ENCODE measurements at regions of chr18 and their contacts with region 1.

Region 1: GRCh38 chr18:53139746-53140500 is 799.9 kb downstream of the DCC start:
- DNase-seq: no peak
- H3K4me3 ChIP-seq: no peak overlapping the region
- H3K27ac ChIP-seq: no peak overlapping the region
- H3K4me1 ChIP-seq: no peaks in the 10 kb centered on the region
- H3K27me3 ChIP-seq: no peaks in the 10 kb centered on the region
- CTCF ChIP-seq: no peak
- EP300 ChIP-seq: no peak
- POLR2A ChIP-seq: no peak

Region 2: DNA sequence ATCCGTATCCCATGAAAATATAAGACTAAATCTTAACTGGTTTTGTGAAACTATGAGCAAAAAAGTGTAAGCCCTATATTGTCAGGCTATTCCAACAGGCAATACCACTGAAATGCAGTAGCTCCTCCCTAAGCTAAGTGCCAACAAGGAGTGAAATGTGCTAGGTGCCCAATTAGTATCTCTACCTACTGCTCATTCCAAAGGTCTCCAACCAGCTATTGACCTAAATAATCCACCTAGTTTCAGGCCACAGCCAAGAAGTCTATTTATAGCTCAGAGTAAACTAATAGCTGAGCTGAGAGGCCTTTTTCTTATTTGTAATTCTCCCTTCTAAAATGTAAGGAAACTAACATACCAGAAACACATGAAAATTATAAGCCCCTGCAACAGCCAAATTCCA is 317.8 kb before region 1 on chr18:
- intact Hi-C with region 1: no loop called
- DNase-seq: no peak
- H3K4me3 ChIP-seq: no peak overlapping the region
- H3K27ac ChIP-seq: peak overlapping the region in 1 of 4 donors; percentile 8
- H3K4me1 ChIP-seq: peaks cover 0 to 26% (median 24%) of the 10 kb centered on the region in 4 donors
- H3K27me3 ChIP-seq: no peaks in the 10 kb centered on the region
- CTCF ChIP-seq: no peak
- EP300 ChIP-seq: no peak
- POLR2A ChIP-seq: no peak

Region 3: DNA sequence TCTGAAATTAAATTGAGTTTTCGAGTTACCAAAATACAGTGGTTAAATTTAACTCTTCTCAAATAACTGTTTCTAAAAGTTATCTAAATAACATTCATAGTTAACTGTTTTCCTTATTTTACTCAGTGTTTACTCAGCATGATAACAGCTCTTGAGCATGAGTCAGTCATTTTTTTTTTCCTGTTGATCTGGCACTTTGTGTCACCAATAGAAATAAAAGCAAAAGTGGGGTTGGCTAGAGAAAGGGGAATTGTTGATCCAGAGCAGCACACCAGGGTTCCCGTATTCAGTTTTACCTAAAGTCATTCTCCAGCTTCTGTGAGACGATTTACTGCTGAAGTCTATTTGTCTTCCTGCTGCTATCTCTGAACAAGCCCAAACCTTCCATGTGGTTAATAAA is 51.7 kb after region 1 on chr18:
- intact Hi-C with region 1: loop called (anchors 10 kb)
- DNase-seq: no peak
- H3K4me3 ChIP-seq: no peak overlapping the region
- H3K27ac ChIP-seq: no peak overlapping the region
- H3K4me1 ChIP-seq: no peaks in the 10 kb centered on the region
- H3K27me3 ChIP-seq: no peaks in the 10 kb centered on the region
- CTCF ChIP-seq: no peak
- EP300 ChIP-seq: no peak
- POLR2A ChIP-seq: no peak

Measured in sigmoid colon (tissue), 7 donors.